ENCODE measurements at regions of chr9 and their contacts with region 1.

Region 1: GRCh38 chr9:128034821-128035764 is 32.0 kb downstream of the NAIF1 start:
- DNase-seq: peak; percentile 75
- H3K4me3 Mint-ChIP-seq: peak overlapping the region; percentile 35
- H3K27ac Mint-ChIP-seq: peak overlapping the region; percentile 23
- H3K4me1 Mint-ChIP-seq: peaks cover 38% of the 10 kb centered on the region
- H3K27me3 Mint-ChIP-seq: peaks cover 2% of the 10 kb centered on the region

Region 2: DNA sequence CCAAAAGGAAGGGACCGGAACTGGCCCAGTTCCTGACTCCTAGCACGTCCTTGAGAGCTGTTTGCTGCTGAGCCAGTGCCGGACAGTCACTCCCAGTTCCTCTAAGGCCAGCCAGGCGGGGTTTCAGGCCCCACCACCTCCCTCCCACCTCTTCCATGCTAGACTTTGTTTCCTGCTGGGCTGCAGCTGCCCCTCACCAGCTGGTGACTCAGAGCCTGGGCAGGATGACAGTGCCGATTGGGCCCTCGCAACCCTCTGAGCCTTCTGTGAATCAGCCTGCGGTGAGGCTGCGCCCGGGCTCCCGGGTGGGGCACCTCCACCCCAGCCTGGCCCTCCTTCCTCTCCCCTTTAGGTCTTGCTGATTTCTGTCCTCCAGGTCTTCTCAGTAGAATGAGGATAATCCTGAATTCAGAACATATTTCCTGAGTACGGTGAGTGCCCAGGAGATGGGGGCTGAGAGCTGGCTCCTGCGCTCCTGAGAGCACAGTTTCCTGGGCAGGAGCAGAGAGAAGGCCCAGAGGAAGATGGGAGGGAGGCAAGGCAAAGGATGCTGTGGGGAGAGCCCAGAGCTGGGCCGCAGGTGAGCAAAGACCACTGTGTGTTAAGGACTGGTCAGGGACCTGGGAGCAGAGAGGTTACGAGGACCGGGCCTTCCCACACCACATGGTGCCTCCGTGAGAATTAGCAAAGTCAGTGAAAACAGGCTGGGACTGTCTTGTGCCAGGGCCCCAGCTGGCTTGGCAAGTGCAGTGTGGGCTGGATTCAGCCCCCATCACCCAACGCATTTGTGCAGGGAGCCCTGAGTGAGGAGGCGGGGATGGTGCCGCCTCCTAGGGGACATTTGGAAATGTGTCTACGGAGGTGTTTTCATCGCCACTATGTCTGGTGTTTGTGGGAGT is 455.9 kb before region 1 on chr9:
- CTCF ChIA-PET with region 1: no interaction called
- POLR2A ChIA-PET with region 1: no interaction called
- intact Hi-C with region 1: no loop called
- DNase-seq: peak; percentile 90
- H3K4me3 Mint-ChIP-seq: peak overlapping the region; percentile 72
- H3K27ac Mint-ChIP-seq: peak overlapping the region; percentile 80
- H3K4me1 Mint-ChIP-seq: peaks cover 31% of the 10 kb centered on the region
- H3K27me3 Mint-ChIP-seq: peaks cover 2% of the 10 kb centered on the region

Region 3: GRCh38 chr9:127854184-127854806 is 180.8 kb before region 1 on chr9 and contains the start of gene ENG:
- CTCF ChIA-PET with region 1: no interaction called
- POLR2A ChIA-PET with region 1: no interaction called
- intact Hi-C with region 1: no loop called
- DNase-seq: peak; percentile 42
- H3K4me3 Mint-ChIP-seq: peak within 1 kb of the TSS; percentile 84
- H3K27ac Mint-ChIP-seq: peak within 1 kb of the TSS; percentile 81
- H3K4me1 Mint-ChIP-seq: peaks cover 21% of the 10 kb centered on the region
- H3K27me3 Mint-ChIP-seq: no peaks in the 10 kb centered on the region
- total RNA-seq, gene ENG: 12.0 to 12.2 TPM

Region 4: DNA sequence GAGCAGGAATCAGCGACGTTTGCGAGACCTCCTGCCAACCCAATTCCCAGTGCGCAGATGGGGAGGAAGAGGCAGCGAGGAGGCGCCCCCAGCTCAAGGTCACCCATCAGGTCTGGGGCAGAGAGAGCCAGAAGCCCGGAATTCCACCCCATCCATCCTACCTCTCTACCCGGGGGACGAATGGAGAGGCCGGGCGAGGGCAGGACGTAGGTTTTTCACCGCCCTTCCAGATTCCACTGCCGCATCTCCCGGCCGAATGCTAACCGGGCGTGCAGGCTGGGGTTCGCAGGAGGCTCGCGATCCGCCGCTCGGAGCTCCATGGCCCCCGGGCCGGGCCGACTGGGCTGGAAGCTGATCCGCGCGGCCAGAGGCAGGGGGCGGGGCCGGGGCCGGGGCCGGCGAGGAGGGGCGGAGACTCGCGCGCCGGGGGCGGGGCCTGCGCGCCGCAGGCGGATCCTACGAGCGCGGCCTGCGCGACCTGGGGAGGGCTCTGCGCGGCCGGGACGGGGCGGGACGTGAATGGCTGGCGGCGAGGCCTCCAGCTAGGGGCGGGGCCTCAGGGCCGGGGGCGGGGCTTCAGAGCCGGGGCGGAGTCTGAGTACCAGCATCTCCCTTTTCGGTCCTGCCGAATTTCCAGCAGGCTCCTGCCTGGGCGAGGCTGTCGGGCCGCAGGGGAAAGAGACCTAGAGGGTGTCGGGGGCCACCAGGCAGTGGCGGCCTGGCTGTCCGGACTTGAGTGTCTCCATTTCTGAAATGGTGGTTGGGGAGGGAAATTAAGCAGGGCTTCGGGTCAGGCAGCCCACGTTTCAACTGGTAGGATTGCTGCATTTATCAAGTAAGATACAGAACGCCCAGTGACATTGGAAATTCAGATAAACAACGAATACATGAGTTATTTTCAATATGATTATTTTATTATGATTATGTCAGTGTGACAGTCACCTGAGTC is 118.2 kb before region 1 on chr9 and contains the start of gene ST6GALNAC4:
- CTCF ChIA-PET with region 1: interaction called, 24 read pairs
- POLR2A ChIA-PET with region 1: no interaction called
- intact Hi-C with region 1: no loop called
- DNase-seq: peak; percentile 98
- H3K4me3 Mint-ChIP-seq: peak within 1 kb of the TSS; percentile 77
- H3K27ac Mint-ChIP-seq: peak within 1 kb of the TSS; percentile 54
- H3K4me1 Mint-ChIP-seq: peaks cover 43% of the 10 kb centered on the region
- H3K27me3 Mint-ChIP-seq: no peaks in the 10 kb centered on the region
- total RNA-seq, gene ST6GALNAC4: 21.2 to 23.5 TPM

Region 5: DNA sequence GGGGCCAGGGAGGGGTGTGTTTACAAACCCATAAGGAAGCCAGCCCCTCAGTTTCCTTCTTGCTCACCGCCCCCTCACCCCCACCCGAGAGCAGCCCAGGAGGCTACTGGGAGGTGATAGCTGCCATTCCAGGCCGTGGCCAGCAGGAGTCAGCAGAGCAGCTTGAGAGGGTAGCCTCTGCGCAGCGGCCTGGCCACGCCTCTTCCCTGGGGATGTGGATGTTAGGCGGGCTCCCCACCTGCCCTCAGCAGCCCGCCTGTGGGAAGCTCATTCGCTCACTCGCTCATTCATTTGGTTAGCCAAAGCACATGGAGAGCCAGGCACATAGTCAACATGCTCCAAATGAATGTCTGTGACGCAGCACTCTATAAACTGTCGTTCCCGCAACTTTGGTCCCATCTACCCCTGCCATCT is 91.4 kb before region 1 on chr9:
- CTCF ChIA-PET with region 1: interaction called, 347 read pairs
- POLR2A ChIA-PET with region 1: interaction called, 7 read pairs
- intact Hi-C with region 1: loop called (anchors 1 kb)
- DNase-seq: peak; percentile 87
- H3K4me3 Mint-ChIP-seq: no peak overlapping the region
- H3K27ac Mint-ChIP-seq: peak overlapping the region; percentile 61
- H3K4me1 Mint-ChIP-seq: peaks cover 18% of the 10 kb centered on the region
- H3K27me3 Mint-ChIP-seq: no peaks in the 10 kb centered on the region

Region 6: DNA sequence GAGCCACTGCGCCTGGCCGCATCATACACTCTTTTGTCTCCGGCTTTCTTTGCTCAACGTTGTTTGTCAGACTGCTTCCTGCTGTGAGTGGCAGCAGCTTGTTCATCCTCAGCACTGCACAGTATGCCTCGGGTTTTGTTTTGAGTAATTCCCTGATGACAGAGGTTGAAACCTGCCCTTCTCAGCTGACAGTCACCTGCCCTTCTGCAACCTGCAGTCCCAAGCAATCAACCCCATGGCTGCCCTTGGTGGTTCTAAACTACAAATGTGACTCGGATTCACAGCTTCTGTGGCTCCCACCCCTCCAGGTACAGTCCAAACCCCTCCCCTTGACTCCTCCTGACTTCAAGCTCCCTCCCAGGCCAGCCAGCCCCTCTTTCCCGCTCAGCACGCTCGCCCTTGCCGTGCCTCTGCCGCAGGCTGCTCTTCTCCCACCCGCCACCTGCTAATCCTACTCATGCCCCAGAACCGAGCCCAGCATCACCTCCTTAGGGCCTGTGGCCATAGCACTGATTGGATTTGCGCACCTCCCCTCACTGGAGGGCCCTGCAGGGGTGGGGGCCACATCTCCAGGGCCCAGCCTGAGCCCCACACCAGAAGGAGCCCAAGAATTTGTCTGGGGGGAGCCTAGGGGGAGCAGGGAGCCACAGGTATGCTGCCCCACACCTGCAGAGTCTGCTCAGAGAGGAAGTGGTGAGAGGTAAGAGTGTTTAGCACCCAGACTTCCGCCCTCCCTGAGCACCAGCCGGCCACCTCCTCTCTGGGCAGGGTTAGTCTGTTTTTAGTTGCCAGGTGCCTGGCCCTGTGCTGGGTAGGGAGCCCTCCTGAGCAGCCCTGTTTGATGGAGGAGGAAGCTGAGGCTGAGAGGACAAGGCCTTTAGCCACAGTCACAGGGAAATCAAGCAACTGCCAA is 64.4 kb before region 1 on chr9:
- CTCF ChIA-PET with region 1: interaction called, 76 read pairs
- POLR2A ChIA-PET with region 1: interaction called, 6 read pairs
- intact Hi-C with region 1: loop called (anchors 1 kb)
- DNase-seq: peak; percentile 89
- H3K4me3 Mint-ChIP-seq: peak overlapping the region; percentile 62
- H3K27ac Mint-ChIP-seq: peak overlapping the region; percentile 88
- H3K4me1 Mint-ChIP-seq: peaks cover 97% of the 10 kb centered on the region
- H3K27me3 Mint-ChIP-seq: no peaks in the 10 kb centered on the region

Region 7: DNA sequence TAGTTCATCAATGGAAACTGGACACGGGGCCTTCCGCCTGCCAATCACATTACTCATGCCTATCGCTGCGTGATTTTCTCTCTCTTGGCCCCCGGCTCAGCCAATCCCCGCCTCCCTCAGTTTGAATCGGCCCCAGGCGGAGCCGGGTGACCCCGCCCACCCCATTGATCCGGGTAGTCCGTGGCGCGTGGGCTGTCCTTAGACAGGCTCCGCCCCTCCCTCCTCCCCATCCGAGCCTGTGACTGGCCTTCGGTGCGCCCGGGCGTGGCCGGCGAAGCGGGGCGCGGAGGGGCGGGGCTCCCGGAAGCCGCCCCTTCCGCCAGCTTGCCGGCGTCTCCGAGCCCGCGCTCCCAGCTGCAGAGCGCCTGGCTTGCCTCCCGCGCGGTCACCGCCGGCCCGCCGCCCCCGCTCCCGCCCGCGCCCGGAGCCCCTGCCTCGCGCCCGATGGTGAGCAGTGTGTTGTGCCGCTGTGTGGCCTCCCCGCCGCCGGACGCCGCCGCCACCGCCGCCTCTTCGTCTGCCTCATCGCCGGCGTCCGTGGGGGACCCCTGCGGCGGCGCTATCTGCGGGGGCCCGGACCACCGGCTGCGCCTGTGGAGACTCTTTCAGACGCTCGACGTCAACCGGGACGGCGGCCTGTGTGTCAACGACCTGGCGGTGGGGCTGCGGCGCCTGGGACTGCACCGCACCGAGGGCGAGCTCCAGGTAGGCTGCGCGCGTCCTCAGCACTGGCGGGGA is 33.0 kb after region 1 on chr9 and contains the start of gene SLC25A25:
- CTCF ChIA-PET with region 1: interaction called, 15 read pairs
- POLR2A ChIA-PET with region 1: no interaction called
- intact Hi-C with region 1: no loop called
- DNase-seq: peak; percentile 100
- H3K4me3 Mint-ChIP-seq: peak within 1 kb of the TSS; percentile 96
- H3K27ac Mint-ChIP-seq: peak within 1 kb of the TSS; percentile 91
- H3K4me1 Mint-ChIP-seq: peaks cover 49% of the 10 kb centered on the region
- H3K27me3 Mint-ChIP-seq: no peaks in the 10 kb centered on the region
- total RNA-seq, gene SLC25A25: 17.1 to 17.3 TPM

Region 8: DNA sequence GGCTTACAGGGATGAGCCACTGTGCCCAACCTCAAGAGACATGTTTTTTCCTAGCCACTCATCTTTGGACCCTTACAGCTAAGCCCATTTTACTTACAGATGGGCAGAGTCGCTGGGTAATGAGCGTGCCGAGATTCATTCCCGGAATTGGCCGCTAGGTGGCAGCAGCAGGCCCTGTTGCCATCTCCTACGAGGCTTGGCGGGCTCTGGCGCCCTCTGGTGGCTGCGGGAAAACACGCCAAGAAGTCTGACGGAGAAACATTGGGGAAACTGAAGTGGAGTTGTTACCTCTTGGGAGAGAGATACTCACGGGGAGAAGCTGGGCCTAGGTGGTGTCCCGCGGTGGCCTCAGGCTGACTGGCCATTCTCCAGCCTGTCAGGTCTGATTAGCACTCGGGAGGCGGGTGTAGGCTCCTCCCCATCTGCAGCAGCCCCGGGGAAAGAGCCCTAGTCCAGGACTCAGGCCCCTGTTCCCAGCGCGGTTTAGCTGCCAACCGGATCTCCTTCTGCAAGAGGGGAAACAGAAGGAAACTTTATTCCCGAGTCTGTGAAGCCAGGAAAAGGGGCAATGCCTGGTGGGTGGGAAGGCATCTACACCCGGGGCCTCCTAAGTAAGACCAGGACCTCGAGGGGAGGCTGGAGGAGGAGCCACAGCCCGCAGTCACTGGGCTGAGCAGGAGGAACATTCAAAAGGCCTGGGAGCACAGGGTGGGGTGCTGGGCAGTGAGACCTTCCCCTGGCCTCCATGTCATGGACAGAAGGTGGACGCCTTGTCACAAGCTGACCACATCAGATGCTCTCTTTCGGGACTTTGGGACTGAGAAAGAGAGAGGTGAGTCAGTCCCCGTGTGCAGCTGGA is 82.7 kb after region 1 on chr9:
- CTCF ChIA-PET with region 1: interaction called, 17 read pairs
- POLR2A ChIA-PET with region 1: no interaction called
- intact Hi-C with region 1: loop called (anchors 5 kb)
- DNase-seq: peak; percentile 97
- H3K4me3 Mint-ChIP-seq: no peak overlapping the region
- H3K27ac Mint-ChIP-seq: peak overlapping the region; percentile 29
- H3K4me1 Mint-ChIP-seq: peaks cover 8% of the 10 kb centered on the region
- H3K27me3 Mint-ChIP-seq: no peaks in the 10 kb centered on the region